A673 (cell line): ENCODE measurements at regions of chr7 and their contacts with region 1.

Region 1: GRCh38 chr7:44858161-44858560 is 10.3 kb upstream of the H2AZ2 start:
- DNase-seq: no peak
- H3K4me3 ChIP-seq: no peak overlapping the region
- H3K27ac ChIP-seq: no peak overlapping the region
- H3K4me1 ChIP-seq: no peaks in the 10 kb centered on the region
- H3K27me3 ChIP-seq: no peaks in the 10 kb centered on the region
- CTCF ChIP-seq: peak; percentile 11; the same call in 1 of the 2 replicates

Region 2: DNA sequence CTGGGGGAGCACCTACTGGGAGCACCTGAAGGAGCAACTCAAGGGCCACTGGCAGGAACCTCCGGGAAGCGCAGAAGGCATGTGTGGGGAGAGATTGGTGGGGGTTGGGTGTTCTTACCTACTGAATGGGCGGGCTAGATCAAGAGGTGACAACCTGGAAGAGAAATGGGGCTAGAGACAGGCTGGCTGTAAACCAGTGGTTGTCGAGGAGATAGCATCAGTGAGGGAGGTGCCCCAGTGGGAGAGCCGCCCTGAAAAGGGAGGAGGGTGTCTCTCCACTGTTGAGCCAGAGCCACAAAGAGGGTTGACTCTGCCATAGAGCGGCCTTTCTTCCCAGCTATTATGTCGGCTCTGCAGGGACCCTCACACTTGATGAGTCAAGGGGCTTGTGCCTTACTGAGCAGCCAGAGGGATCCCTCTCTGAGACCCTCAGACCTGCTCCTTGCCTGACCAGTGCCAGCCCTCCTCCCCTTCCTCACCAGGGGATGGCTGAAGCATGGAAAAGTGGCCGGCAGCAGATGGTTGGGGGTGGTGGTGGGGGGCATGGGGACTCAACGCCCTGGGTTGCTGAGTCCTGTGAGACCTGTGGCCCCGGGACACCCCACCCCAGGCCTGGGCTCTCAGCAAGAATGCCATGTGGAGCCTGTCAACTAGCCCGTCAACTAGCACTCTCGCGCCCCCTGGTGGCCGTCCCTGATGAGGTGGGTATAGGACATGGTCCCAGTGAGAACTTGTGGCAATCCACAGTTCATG is 63.6 kb after region 1 on chr7:
- CTCF ChIA-PET with region 1: interaction called, 3 read pairs
- POLR2A ChIA-PET with region 1: no interaction called
- intact Hi-C with region 1: loop called (anchors 1 kb)
- DNase-seq: peak; percentile 83
- H3K4me3 ChIP-seq: no peak overlapping the region
- H3K27ac ChIP-seq: no peak overlapping the region
- H3K4me1 ChIP-seq: no peaks in the 10 kb centered on the region
- H3K27me3 ChIP-seq: no peaks in the 10 kb centered on the region
- CTCF ChIP-seq: peak; percentile 90

Region 3: DNA sequence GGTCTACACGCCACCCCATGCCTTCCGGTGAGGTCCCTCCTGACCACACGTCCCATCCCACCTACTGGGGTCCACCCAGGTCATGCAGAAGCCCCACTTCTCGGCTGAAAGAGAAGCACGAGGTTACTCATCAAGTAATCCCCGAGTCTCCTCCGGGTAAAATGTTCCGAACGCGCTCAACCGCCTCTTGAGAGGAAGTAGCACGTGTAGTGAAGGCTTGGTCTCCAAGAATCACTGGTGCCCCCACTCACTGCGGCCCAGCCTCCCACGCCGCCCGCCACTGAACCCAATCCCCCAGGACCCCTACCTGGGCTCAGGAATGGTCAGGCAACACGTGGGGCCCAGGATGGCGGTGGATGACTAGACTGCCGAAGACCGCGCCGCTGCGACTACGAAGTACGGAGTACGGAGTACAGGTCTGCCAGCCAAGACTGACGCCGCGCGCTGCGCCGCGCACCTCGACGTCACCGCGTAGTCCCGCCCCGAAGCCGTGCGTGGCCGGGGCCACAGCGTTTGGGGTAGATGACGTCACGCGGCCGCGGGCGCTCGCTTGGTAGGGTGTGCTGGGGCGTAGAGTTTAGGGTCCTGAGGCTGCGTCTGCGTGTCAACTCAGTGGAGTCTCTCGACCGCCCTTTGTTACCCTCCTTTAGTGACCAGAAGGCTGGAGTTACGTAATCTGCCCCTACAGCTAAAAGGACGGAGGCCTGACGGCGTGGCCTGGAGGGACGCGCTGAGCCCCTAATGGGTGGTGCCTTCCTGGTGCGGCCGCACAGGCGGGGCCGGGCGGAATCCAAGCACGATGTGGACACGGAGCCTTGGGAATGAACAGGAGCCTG is 128.3 kb after region 1 on chr7:
- CTCF ChIA-PET with region 1: no interaction called
- POLR2A ChIA-PET with region 1: no interaction called
- intact Hi-C with region 1: loop called (anchors 10 kb)
- DNase-seq: peak; percentile 97
- H3K4me3 ChIP-seq: peak overlapping the region; percentile 74
- H3K27ac ChIP-seq: peak overlapping the region; percentile 96
- H3K4me1 ChIP-seq: peaks cover 25% of the 10 kb centered on the region
- H3K27me3 ChIP-seq: no peaks in the 10 kb centered on the region
- CTCF ChIP-seq: no peak

Region 4: DNA sequence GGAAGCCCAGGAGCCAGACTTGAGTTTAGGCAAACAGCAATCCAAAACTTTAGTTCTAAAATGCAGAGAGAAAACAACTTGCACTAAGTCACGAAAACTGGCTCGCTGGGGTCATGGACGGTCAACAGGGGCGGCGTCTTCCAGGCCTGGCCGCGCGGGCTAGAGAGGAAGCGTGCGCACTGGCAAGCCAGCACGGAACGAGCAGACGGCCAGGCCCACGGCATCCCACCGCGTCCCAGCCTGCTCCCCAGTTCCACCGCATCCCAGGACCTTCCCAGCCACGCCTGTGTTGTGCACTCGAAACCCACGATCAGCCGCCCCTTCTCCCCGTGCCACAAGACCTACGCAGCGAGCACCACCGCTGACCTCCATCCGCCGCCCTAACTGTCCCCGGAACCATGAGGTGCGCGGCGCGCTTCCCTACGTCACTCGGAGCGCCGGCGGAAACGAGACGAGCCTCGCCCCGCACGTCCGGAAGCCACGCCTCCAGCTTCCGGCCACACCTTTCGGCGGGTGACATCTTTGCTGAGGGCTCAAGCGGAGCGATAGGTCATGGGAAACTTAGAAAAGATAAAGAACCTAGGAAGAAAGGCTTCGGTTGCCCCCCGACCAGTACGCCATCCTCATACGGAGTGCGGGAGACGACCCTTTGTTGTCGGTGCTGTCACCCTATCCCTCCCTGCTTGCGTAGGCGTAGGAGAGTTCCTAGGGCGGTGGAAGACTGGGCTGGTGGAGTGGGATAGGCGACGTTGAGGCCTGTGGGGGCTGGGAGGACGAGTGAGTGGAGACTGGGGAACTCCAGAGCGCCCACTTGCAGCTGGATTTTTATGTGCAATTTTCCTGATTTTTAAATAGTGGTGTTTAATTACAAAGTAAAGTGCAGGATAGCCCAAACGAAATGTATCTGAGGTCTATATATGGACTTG is 253.4 kb after region 1 on chr7 and contains the start of gene TBRG4:
- CTCF ChIA-PET with region 1: no interaction called
- POLR2A ChIA-PET with region 1: no interaction called
- intact Hi-C with region 1: loop called (anchors 1 kb)
- DNase-seq: peak; percentile 97
- H3K4me3 ChIP-seq: peak within 1 kb of the TSS; percentile 86
- H3K27ac ChIP-seq: peak within 1 kb of the TSS; percentile 84
- H3K4me1 ChIP-seq: peaks cover 7% of the 10 kb centered on the region
- H3K27me3 ChIP-seq: peaks cover 4% of the 10 kb centered on the region
- CTCF ChIP-seq: peak; percentile 55
- total RNA-seq, gene TBRG4: 127 and 136 TPM in 2 replicates